ENCODE measurements at regions of chr5 and their contacts with region 1.

Region 1: DNA sequence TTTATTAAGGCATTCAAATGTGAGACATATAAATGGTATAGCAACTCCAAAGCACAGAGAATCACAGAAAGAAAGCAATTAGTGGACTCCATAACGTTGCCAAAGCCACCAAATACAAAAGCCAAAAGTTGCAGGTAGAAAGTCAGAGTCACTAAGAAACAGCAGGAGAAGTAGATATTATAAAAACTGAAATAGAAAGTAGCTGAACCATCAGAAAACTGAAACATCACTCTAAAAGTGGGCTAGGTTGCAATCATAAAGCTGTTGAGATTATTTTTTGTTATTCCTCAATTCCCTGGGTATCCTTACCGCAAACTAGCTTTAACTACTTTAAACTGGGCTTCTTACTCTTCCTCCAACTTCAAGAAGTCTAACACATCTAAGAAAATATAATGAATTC is 108.1 kb upstream of the ARRDC3 start:
- DNase-seq: no peak
- H3K4me3 ChIP-seq: no peak overlapping the region
- H3K27ac ChIP-seq: no peak overlapping the region
- H3K4me1 ChIP-seq: no peaks in the 10 kb centered on the region
- H3K27me3 ChIP-seq: no peaks in the 10 kb centered on the region
- CTCF ChIP-seq: no peak

Region 2: DNA sequence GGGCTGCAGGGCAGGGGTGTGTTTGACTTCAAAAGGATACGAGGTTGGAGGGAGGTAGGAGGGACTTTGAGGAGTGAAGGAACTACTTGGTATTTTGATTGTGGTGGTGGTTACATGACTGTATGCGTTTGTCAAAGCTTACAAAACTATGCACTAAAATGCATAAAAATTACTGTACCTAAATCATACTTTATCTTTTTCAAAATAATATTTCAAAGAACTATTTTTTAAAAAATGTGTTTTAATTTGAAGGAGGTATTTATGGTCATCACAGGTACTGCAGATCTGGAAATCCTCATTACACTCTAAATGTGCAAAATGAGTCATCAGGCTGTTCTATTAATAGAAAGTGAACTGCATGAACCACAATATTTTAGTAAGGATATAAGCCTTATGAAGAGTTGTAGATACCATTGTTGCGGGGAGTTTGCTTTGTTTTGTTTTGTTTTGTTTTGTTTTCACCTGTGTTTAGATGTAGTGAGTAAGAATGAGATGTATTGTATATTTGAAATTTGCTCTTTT is 225.0 kb before region 1 on chr5:
- CTCF ChIA-PET with region 1: interaction called, 12 read pairs
- POLR2A ChIA-PET with region 1: no interaction called
- intact Hi-C with region 1: no loop called
- DNase-seq: peak in 1 of 2 experiments; percentile 76
- H3K4me3 ChIP-seq: no peak overlapping the region
- H3K27ac ChIP-seq: 0 out of 2 replicates have a peak overlapping the region, but pooled peaks have one; percentile 4
- H3K4me1 ChIP-seq: peaks cover 14% of the 10 kb centered on the region
- H3K27me3 ChIP-seq: no peaks in the 10 kb centered on the region
- CTCF ChIP-seq: peak; percentile 43; the same call in 1 of the 2 replicates

Measured in PC-9 (cell line).